ENCODE measurements at regions of chr1 and their contacts with region 1.

Region 1: GRCh38 chr1:78839704-78840277 is 166.7 kb downstream of the ADGRL4 start:
- DNase-seq: no peak
- H3K4me3 ChIP-seq: no peak overlapping the region
- H3K27ac ChIP-seq: no peak overlapping the region
- H3K4me1 ChIP-seq: peaks cover 16 to 40% (median 37%) of the 10 kb centered on the region in 4 donors
- H3K27me3 ChIP-seq: no peaks in the 10 kb centered on the region
- CTCF ChIP-seq: peak; percentile 64 to 72 (median 71)
- EP300 ChIP-seq: no peak
- POLR2A ChIP-seq: no peak

Region 2: GRCh38 chr1:79197421-79197820 is 357.6 kb after region 1 on chr1:
- intact Hi-C with region 1: loop called (anchors 5 kb)
- DNase-seq: no peak
- H3K4me3 ChIP-seq: no peak overlapping the region
- H3K27ac ChIP-seq: no peak overlapping the region
- H3K4me1 ChIP-seq: peaks cover 0 to 11% (median 4%) of the 10 kb centered on the region in 4 donors
- H3K27me3 ChIP-seq: no peaks in the 10 kb centered on the region
- CTCF ChIP-seq: peak; percentile 28 to 39 (median 31)
- EP300 ChIP-seq: no peak
- POLR2A ChIP-seq: no peak

Measured in esophagus muscularis mucosa (tissue), 4 donors.